Activated B cell treated with CpG ODN at 0.5 μM for 24 hours (primary cell): ENCODE measurements at regions of chr4 and their contacts with region 1.

Region 1: GRCh38 chr4:26583865-26584652 is at the start of gene TBC1D19:
- DNase-seq: peak; percentile 82
- ATAC-seq: peak; percentile 96
- H3K4me3 Mint-ChIP-seq: peak within 1 kb of the TSS; percentile 96
- H3K27ac Mint-ChIP-seq: peak within 1 kb of the TSS; percentile 93
- H3K4me1 Mint-ChIP-seq: peaks cover 24% of the 10 kb centered on the region
- H3K27me3 Mint-ChIP-seq: peaks cover under 1% of the 10 kb centered on the region
- CTCF ChIP-seq: no peak
- total RNA-seq, gene TBC1D19: 5.2 and 6.7 TPM in 2 replicates

Region 2: DNA sequence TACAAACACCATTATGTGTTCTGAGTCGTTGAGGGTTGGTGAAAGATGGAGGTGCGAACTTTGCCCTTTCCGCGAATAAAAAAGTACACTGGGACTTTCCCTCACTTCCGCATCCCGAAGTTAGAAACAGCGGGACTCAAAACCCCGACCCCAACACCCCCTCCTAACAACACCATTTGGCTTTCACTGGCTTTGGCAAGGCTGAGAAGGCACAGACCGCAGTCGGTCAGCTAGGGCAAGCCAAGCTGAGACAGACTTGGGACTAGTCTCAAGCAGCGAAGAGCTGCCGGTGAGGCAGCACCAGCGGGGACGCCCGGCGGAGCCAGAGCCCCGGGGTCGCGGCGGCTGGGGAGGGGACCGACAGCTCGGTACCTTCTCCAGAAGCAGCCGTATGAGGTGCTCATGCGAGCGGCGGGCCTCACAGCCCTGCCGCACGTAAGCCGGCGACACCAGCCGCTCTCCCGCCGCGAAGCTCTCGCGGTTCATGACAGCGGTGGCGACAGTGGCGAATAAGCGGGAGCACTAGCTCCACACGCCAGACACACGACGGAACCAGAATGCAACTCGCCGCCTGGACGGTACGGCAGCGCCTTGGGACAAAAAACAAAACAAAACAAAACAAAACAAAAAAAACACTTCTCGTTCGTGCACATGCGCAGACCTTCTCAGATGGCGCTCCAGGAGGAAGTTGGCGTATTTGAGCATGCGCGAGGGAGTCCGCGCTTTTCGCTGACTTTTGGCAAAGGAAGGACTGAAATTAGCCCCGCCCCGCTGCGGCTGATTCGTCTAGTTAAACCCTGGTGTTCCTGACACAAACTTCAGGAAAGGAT is 1424.0 kb before region 1 on chr4 and contains the start of gene SEPSECS:
- CTCF ChIA-PET with region 1: no interaction called
- POLR2A ChIA-PET with region 1: no interaction called
- intact Hi-C with region 1: loop called (anchors 5 kb)
- DNase-seq: peak; percentile 84
- ATAC-seq: peak; percentile 79
- H3K4me3 Mint-ChIP-seq: peak within 1 kb of the TSS; percentile 89
- H3K27ac Mint-ChIP-seq: peak within 1 kb of the TSS; percentile 91
- H3K4me1 Mint-ChIP-seq: peaks cover 36% of the 10 kb centered on the region
- H3K27me3 Mint-ChIP-seq: no peaks in the 10 kb centered on the region
- CTCF ChIP-seq: no peak
- total RNA-seq, gene SEPSECS: 9.9 and 12.4 TPM in 2 replicates

Region 3: DNA sequence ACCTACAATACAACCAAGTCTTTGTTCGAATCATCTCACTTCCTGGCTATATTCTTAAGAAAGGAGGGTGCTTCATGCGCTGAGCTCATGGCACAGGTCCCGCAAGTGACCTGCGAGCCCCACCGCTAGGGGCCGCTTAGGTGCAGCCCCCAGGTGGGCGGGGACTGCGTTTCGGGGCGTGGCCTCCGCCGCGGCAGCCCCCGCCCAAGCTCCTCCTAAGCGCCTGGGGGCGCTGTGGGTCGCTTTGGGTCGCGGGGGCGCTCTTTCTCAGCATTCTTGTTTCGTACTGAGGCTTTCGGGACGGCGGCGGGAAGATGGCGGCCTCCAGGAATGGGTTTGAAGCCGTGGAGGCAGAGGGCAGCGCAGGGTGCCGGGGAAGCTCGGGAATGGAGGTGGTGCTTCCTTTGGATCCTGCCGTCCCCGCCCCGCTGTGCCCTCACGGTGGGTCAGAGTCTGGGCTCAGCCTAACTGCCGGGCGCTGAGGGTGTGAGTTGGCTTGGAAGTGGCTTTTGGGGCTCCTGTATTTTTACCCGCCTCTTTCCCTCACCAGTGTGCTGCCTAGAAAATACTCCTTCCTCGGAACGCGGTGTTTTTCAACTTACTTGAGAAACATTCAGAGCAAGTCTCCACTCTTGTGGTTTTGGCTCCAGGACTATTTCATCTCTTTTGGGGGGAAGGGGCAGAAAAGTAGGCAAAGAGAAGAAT is 1271.4 kb before region 1 on chr4 and contains the start of gene ZCCHC4:
- CTCF ChIA-PET with region 1: interaction called, 3 read pairs
- POLR2A ChIA-PET with region 1: no interaction called
- intact Hi-C with region 1: loop called (anchors 5 kb)
- DNase-seq: peak; percentile 95
- ATAC-seq: peak; percentile 99
- H3K4me3 Mint-ChIP-seq: peak within 1 kb of the TSS; percentile 98
- H3K27ac Mint-ChIP-seq: peak within 1 kb of the TSS; percentile 95
- H3K4me1 Mint-ChIP-seq: peaks cover 45% of the 10 kb centered on the region
- H3K27me3 Mint-ChIP-seq: no peaks in the 10 kb centered on the region
- CTCF ChIP-seq: peak; percentile 90
- total RNA-seq, gene ZCCHC4: 14.7 and 19.1 TPM in 2 replicates

Region 4: DNA sequence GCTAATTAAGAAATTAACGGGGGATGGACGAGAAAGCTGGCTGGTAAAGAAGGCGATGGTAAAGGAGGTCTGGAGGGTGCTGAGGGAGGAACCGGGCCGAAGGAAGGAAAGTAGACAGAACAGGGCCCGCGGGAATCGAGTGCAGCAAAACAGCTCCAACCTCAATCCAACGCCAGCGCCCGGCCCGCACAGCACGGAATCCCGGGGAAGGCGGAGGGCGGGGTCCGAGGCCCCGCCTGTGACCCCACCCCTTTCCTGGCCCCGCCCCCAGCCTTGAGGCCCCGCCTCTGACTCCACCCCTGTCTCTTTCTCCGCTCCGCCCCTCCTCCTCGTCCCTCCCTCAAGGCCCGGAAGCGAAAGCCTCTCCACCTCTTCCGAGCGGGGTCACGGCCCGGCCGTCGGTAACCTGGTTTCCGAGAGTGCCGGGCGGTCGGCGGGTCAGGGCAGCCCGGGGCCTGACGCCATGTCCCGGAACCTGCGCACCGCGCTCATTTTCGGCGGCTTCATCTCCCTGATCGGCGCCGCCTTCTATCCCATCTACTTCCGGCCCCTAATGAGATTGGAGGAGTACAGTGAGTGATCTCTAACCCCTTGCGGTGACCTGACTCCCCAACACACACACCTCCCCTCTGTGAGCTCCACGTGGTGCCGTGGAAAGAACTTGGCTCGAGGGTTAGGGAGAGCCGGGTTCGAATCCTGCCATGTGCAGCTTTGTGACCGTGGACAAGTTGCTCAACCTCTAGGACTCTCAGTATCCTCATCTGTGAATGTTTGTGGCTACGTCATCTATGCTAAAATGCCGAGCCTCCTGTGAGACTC is 670.0 kb before region 1 on chr4 and contains the start of gene SMIM20:
- CTCF ChIA-PET with region 1: no interaction called
- POLR2A ChIA-PET with region 1: interaction called, 3 read pairs
- intact Hi-C with region 1: loop called (anchors 5 kb)
- DNase-seq: peak; percentile 85
- ATAC-seq: peak; percentile 92
- H3K4me3 Mint-ChIP-seq: peak within 1 kb of the TSS; percentile 99
- H3K27ac Mint-ChIP-seq: peak within 1 kb of the TSS; percentile 97
- H3K4me1 Mint-ChIP-seq: peaks cover 36% of the 10 kb centered on the region
- H3K27me3 Mint-ChIP-seq: no peaks in the 10 kb centered on the region
- CTCF ChIP-seq: no peak
- total RNA-seq, gene SMIM20: 16.6 and 18.7 TPM in 2 replicates

Region 5: DNA sequence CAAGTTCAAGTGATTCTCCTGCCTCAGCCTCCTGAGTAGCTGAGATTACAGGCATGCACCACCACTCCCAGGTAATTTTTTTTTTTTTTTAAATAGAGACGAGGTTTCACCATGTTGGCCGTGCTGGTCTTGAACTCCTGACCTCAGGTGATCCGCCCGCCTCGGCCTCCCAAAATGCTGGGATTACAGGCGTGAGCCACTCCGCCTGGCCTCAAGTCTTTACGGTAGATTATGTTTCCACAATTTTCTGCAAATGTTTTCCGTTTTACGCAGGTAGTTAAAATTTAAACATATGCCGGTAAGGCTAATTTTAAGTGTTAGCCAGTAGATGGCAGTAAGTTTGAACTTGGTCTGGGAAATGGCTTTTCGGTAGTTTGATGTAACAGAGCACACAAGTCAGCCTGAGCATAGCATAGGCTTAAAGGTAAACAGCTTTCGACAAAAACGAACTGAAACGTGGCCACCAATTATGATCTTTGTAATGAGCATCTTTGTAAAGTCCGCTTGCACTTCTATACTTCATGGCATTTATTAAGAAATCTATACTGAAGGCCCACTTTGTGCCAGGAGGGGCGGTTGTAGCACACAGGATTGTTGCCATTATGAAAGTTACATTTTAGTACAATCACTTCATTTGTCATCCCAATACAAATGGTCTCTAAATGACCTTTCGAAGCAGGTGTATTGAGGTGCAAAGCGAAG is 124.9 kb before region 1 on chr4:
- CTCF ChIA-PET with region 1: no interaction called
- POLR2A ChIA-PET with region 1: no interaction called
- intact Hi-C with region 1: loop called (anchors 5 kb)
- DNase-seq: no peak
- ATAC-seq: peak; percentile 64
- H3K4me3 Mint-ChIP-seq: peak overlapping the region; percentile 55
- H3K27ac Mint-ChIP-seq: no peak overlapping the region
- H3K4me1 Mint-ChIP-seq: peaks cover 6% of the 10 kb centered on the region
- H3K27me3 Mint-ChIP-seq: peaks cover 4% of the 10 kb centered on the region
- CTCF ChIP-seq: no peak

Region 6: DNA sequence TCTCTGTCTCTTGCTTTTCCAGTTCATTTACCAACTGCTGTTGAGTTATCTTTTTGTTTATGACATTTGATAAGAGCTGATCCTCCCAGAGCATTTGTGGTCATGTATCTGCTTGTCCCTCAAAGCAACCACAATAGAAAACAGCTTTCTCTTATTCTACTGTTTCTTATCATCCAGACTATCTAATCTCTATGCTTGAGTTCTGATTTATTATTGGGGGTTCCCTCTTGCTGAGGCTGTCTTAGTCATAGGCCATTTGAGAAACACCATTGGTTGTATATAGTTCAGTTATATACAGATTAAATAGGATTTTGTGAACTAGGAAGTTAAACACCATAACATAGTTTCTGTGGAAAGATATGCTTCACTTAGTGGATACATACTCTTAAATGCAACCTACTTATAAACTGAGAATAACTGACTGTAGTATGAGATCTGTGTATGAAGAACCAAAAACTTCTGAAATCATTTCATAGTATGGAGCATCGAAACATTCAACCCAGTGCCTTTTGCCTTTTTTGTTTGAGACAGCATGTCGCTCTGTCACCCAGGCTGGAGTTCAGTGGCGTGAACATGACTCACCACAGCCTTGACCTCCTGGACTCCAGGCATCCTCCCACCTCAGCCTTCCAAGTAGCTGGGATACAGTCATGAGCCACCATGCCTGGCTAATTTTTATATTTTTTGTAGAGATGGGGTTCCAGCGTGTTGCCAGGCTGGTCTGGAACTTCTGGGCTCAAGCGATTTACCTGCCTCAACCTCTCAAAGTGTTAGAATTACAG is 352.4 kb after region 1 on chr4:
- CTCF ChIA-PET with region 1: no interaction called
- POLR2A ChIA-PET with region 1: no interaction called
- intact Hi-C with region 1: loop called (anchors 2 kb)
- DNase-seq: no peak
- ATAC-seq: no peak
- H3K4me3 Mint-ChIP-seq: no peak overlapping the region
- H3K27ac Mint-ChIP-seq: peak overlapping the region; percentile 46
- H3K4me1 Mint-ChIP-seq: peaks cover 68% of the 10 kb centered on the region
- H3K27me3 Mint-ChIP-seq: no peaks in the 10 kb centered on the region
- CTCF ChIP-seq: no peak

Region 7: DNA sequence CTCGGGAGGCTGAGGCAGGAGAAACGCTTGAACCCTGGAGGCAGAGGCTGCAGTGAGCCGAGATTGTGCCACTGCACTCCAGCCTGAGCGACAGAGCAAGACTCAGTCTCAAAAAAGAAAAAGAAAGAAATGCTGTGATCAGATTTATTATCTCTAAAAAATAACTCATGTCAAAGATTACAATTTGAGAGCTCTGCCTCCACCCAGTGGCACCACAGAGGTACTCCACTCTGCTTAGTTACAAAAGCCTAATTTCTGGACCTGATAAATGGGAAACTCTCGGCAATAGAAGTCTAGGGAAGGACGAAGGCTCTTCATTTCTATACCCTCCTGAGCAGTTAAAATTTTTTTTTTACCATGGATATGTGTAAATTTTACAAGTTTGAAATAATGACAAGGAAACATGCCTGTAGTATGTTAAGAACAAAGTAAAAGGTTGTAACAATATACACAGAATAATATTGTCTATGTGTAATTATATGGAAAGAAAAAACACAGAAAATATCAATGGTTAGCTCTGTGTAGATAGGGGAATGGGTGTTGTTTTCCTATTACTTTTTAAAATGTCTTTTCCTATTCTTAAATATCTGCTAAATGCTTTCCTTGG is 426.4 kb after region 1 on chr4:
- CTCF ChIA-PET with region 1: interaction called, 3 read pairs
- POLR2A ChIA-PET with region 1: interaction called, 4 read pairs
- intact Hi-C with region 1: loop called (anchors 2 kb)
- DNase-seq: peak; percentile 31
- ATAC-seq: peak; percentile 85
- H3K4me3 Mint-ChIP-seq: no peak overlapping the region
- H3K27ac Mint-ChIP-seq: peak overlapping the region; percentile 80
- H3K4me1 Mint-ChIP-seq: peaks cover 5% of the 10 kb centered on the region
- H3K27me3 Mint-ChIP-seq: no peaks in the 10 kb centered on the region
- CTCF ChIP-seq: peak; percentile 95

Region 8: DNA sequence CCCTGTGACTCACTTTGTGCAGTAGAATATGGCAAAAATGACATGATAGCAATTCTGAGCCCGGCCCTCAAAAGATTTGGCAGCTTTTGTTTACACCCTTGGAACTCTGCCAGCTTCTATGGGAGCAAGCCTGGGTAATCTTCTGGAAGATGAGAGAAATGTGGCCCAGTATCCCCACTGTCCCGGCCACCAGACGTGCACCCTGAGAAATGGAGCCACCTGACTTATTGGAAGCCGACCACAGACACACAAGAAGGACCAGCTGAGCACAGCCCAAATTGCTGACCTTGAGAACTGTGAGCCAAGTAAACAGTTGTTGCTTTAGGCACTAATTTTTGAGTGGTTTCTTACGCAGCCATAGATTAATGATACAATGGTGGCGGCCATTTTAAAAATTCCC is 473.6 kb after region 1 on chr4:
- CTCF ChIA-PET with region 1: no interaction called
- POLR2A ChIA-PET with region 1: no interaction called
- intact Hi-C with region 1: no loop called
- DNase-seq: no peak
- ATAC-seq: no peak
- H3K4me3 Mint-ChIP-seq: no peak overlapping the region
- H3K27ac Mint-ChIP-seq: no peak overlapping the region
- H3K4me1 Mint-ChIP-seq: no peaks in the 10 kb centered on the region
- H3K27me3 Mint-ChIP-seq: peaks cover 22% of the 10 kb centered on the region
- CTCF ChIP-seq: no peak